Testis (tissue), 5 donors: ENCODE measurements at regions of chrX and their contacts with region 1.

Region 1: GRCh38 chrX:38175140-38175539 is 45.5 kb downstream of the SRPX start:
- DNase-seq: peak; percentile 45
- H3K4me3 ChIP-seq: no peak overlapping the region
- H3K27ac ChIP-seq: no peak overlapping the region
- H3K4me1 ChIP-seq: no peaks in the 10 kb centered on the region
- H3K27me3 ChIP-seq: no peaks in the 10 kb centered on the region
- CTCF ChIP-seq: peak in 1 of 3 experiments; percentile 37
- POLR2A ChIP-seq: no peak

Region 2: DNA sequence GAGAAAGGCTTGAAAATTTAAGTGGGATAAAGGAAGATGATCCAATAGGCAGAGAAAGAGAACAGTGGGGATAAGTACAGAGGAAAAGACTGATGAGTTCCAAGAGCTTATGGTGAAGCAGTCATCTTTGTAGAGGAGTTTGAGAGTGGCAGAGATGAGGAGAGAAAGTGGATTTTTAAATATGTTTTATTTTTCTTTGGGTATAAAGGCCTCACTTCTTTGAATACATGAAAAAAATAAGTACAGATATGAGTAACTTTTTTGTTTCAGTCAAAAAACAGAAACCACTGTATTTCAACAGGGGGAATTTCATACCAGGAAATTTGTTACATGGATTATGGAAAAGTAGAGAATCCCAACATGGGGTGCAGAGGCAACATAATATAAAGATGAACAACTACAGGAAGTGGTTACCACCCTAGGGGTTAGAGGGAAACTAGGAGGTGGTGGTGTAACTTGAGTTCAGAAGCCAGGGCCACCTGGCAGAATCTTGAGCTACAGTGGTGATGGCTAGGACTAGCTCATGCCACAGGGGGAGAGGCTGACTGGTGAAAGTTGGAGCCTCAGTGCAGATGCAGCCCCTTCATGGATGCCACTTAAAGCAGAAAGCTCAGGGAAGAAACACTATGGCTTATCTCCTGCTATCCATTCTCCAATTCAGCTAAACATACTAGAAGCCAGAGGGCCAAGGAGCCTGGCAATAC is 398.7 kb before region 1 on chrX:
- intact Hi-C with region 1: no loop called
- DNase-seq: no peak
- H3K4me3 ChIP-seq: no peak overlapping the region
- H3K27ac ChIP-seq: no peak overlapping the region
- H3K4me1 ChIP-seq: no peaks in the 10 kb centered on the region
- H3K27me3 ChIP-seq: no peaks in the 10 kb centered on the region
- CTCF ChIP-seq: no peak
- POLR2A ChIP-seq: no peak

Region 3: DNA sequence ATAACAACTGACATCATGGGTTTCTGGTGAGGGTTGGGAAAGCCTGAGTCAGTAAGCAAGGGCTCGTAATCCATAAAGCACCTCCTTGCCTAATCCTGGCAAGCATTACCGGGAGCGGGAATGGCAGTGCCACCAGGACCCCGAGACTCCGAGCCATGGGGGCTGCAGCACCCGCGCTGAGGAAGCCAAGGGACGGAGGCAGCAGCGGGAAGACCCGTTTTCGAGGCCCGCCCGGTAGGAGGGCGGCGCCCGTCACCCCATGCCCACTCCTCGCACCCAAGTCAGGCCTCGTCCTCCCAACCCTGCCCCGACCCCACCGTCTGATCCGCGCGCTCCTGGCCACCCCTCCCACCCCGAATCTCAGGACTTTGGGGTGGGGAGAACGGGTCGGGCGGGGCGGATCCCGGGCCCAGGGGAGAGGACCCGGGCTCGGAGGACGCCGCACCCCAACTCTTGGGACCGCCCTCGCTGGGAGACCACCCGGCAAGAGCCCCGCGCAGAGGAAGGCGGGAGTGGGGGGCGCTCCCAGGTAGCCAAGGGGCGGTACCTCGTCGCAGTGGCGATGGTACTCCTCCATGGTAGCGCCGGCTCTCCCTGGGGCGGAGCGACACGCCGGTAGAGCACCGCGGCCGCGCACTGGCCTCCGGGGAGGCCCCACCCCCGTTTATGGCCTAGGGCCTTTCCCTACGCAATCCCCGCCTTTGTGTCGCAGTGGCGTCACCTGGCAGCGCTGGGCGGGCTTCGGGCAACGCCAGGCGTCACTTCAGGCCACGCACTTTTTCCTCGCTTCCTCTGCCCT is 328.0 kb before region 1 on chrX and contains the start of gene DYNLT3:
- intact Hi-C with region 1: loop called (anchors 10 kb)
- DNase-seq: peak; percentile 83
- H3K4me3 ChIP-seq: peak within 1 kb of the TSS; percentile 71 to 84
- H3K27ac ChIP-seq: peak within 1 kb of the TSS; percentile 84 to 88
- H3K4me1 ChIP-seq: no peaks in the 10 kb centered on the region
- H3K27me3 ChIP-seq: no peaks in the 10 kb centered on the region
- CTCF ChIP-seq: no peak
- POLR2A ChIP-seq: no peak
- total RNA-seq, gene DYNLT3: 11.1 to 11.7 TPM

Region 4: GRCh38 chrX:38069273-38069672 is 105.9 kb before region 1 on chrX:
- intact Hi-C with region 1: no loop called
- DNase-seq: no peak
- H3K4me3 ChIP-seq: no peak overlapping the region
- H3K27ac ChIP-seq: no peak overlapping the region
- H3K4me1 ChIP-seq: no peaks in the 10 kb centered on the region
- H3K27me3 ChIP-seq: no peaks in the 10 kb centered on the region
- CTCF ChIP-seq: no peak
- POLR2A ChIP-seq: no peak